GM12878 (cell line): ENCODE measurements at regions of chr3 and their contacts with region 1.

Region 1: DNA sequence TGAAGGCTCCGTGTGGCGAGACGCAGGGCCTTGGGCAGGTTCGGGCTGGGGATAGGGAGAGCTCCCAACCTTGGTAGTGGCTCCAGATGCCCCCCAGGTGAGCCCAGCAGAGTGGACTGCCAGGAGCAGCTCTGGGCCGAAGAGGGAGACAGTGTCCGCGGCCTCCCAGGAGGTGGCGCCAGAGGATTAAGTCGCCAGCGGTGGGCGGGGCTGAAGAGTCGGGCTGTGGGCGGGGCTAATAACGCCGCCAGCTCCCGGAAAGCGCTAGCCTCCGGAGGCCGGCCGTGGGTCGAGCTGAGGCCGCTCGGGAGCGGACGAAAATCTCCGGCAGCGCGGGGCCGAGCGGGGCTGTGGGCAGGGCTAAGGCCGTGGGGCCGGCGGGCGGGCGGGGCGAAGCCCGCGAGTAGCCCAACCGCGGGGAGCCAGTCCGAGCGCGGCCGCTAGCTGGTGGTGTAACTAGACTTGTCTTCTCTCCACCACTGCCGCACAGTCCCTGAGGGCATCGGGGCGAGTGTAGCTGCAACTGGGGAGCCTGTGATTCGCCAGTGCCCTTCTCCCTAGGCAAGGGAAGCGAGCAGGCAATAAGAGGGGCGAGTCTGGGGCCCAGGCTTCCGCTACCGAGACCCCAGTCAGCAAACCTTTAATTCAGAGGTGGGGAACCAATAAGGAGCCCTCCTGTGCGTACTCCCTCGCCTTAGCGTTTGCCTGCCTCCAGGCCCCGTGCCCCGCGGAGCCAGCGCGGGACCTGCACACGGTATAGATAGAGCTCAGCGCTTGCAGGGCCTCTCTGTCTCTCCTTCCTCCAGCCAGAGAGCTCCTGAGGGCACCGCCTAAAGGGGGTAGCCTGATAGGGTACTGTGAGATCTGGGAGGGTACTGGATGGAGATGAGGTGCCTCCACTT is 14.4 kb upstream of the BSN start:
- DNase-seq: peak; percentile 45
- ATAC-seq: peak; percentile 98
- H3K4me3 ChIP-seq: peak overlapping the region; percentile 50; the same call in 1 of the 2 replicates
- H3K27ac ChIP-seq: no peak overlapping the region
- H3K4me1 ChIP-seq: peaks cover 5% of the 10 kb centered on the region; the same call in 1 of the 2 replicates
- H3K27me3 ChIP-seq: no peaks in the 10 kb centered on the region; a peak in 1 of 4 replicates
- CTCF ChIP-seq: peak; percentile 83 to 97 (median 93); a peak in 5 of 6 replicates
- EP300 ChIP-seq: no peak
- POLR2A ChIP-seq: 0 out of 2 replicates have a peak, but pooled peaks have one; percentile 36
- RAD21 ChIP-seq: peak; percentile 94

Region 2: DNA sequence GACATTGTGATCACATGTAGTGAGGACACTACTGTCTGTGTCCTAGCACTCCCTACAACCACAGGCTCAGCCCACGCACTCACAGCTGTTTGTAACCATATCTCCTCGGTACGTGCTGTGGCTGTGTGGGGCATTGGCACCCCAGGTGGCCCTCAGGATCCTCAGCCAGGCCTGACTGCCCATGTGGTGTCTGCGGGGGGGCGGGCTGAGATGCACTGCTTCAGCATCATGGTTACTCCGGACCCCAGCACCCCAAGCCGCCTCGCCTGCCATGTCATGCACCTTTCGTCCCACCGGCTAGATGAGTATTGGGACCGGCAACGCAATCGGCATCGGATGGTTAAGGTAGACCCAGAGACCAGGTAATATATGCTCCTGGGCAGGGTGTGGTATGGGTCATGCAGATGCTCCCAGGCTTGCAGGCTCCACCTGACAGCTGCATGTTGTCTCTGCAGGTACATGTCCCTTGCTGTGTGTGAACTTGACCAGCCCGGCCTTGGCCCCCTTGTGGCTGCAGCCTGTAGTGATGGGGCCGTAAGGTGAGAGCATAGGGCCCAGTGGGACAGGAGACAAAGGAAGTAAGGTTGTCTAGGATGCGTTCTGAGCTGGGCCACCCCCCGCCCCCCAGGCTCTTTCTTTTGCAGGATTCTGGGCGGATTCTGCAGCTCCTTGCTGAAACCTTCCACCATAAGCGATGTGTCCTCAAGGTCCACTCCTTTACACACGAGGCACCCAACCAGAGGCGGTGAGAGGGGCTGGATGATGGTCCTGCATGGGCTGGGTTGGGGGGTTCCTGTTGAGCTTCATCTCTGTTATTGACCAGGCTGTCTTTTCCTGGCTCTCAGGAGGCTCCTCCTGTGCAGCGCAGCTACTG is 525.9 kb before region 1 on chr3:
- CTCF ChIA-PET with region 1: no interaction called
- POLR2A ChIA-PET with region 1: no interaction called
- RAD21 ChIA-PET with region 1: no interaction called
- SMC1A ChIA-PET with region 1: no interaction called
- in situ Hi-C with region 1: no loop called
- intact Hi-C with region 1: no loop called
- DNase-seq: no peak
- ATAC-seq: peak; percentile 67
- H3K4me3 ChIP-seq: no peak overlapping the region
- H3K27ac ChIP-seq: no peak overlapping the region
- H3K4me1 ChIP-seq: peaks cover 5% of the 10 kb centered on the region; the same call in 1 of the 2 replicates
- H3K27me3 ChIP-seq: no peaks in the 10 kb centered on the region
- CTCF ChIP-seq: peak; percentile 62 to 85 (median 71)
- EP300 ChIP-seq: no peak
- POLR2A ChIP-seq: no peak
- RAD21 ChIP-seq: peak; percentile 48

Region 3: GRCh38 chr3:49500205-49500731 is 39.6 kb before region 1 on chr3:
- CTCF ChIA-PET with region 1: interaction called, 11 read pairs
- POLR2A ChIA-PET with region 1: interaction called, 3 read pairs
- RAD21 ChIA-PET with region 1: interaction called, 3 read pairs
- SMC1A ChIA-PET with region 1: no interaction called
- in situ Hi-C with region 1: no loop called
- intact Hi-C with region 1: no loop called
- DNase-seq: no peak
- ATAC-seq: no peak
- H3K4me3 ChIP-seq: no peak overlapping the region
- H3K27ac ChIP-seq: no peak overlapping the region
- H3K4me1 ChIP-seq: peaks cover 2% of the 10 kb centered on the region
- H3K27me3 ChIP-seq: no peaks in the 10 kb centered on the region
- CTCF ChIP-seq: no peak
- EP300 ChIP-seq: no peak
- POLR2A ChIP-seq: no peak
- RAD21 ChIP-seq: no peak

Region 4: GRCh38 chr3:49553692-49554632 is 14.1 kb after region 1 on chr3 and contains the start of gene BSN:
- CTCF ChIA-PET with region 1: interaction called, 12 read pairs
- POLR2A ChIA-PET with region 1: no interaction called
- RAD21 ChIA-PET with region 1: interaction called, 20 read pairs
- SMC1A ChIA-PET with region 1: interaction called, 4 read pairs
- in situ Hi-C with region 1: no loop called
- intact Hi-C with region 1: no loop called
- DNase-seq: peak; percentile 42
- ATAC-seq: peak; percentile 96
- H3K4me3 ChIP-seq: peak within 1 kb of the TSS; percentile 59
- H3K27ac ChIP-seq: no peak within 1 kb of the TSS
- H3K4me1 ChIP-seq: peaks cover 5% of the 10 kb centered on the region
- H3K27me3 ChIP-seq: peaks cover 4 to 9% of the 10 kb centered on the region in 2 experiments
- CTCF ChIP-seq: no peak
- EP300 ChIP-seq: no peak
- POLR2A ChIP-seq: no peak
- RAD21 ChIP-seq: no peak
- polyA plus RNA-seq, gene BSN: under 0.01 TPM in 1 of 2 experiments, not detected in the other

Region 5: GRCh38 chr3:49668861-49669260 is 129.0 kb after region 1 on chr3:
- CTCF ChIA-PET with region 1: interaction called, 210 read pairs
- POLR2A ChIA-PET with region 1: interaction called, 10 read pairs
- RAD21 ChIA-PET with region 1: interaction called, 89 read pairs
- SMC1A ChIA-PET with region 1: interaction called, 86 read pairs
- in situ Hi-C with region 1: loop called (anchors 10 kb)
- intact Hi-C with region 1: loop called (anchors 1 kb)
- DNase-seq: no peak
- ATAC-seq: no peak
- H3K4me3 ChIP-seq: no peak overlapping the region
- H3K27ac ChIP-seq: no peak overlapping the region
- H3K4me1 ChIP-seq: peaks cover 5% of the 10 kb centered on the region
- H3K27me3 ChIP-seq: no peaks in the 10 kb centered on the region
- CTCF ChIP-seq: no peak
- EP300 ChIP-seq: no peak
- POLR2A ChIP-seq: no peak
- RAD21 ChIP-seq: no peak

Region 6: DNA sequence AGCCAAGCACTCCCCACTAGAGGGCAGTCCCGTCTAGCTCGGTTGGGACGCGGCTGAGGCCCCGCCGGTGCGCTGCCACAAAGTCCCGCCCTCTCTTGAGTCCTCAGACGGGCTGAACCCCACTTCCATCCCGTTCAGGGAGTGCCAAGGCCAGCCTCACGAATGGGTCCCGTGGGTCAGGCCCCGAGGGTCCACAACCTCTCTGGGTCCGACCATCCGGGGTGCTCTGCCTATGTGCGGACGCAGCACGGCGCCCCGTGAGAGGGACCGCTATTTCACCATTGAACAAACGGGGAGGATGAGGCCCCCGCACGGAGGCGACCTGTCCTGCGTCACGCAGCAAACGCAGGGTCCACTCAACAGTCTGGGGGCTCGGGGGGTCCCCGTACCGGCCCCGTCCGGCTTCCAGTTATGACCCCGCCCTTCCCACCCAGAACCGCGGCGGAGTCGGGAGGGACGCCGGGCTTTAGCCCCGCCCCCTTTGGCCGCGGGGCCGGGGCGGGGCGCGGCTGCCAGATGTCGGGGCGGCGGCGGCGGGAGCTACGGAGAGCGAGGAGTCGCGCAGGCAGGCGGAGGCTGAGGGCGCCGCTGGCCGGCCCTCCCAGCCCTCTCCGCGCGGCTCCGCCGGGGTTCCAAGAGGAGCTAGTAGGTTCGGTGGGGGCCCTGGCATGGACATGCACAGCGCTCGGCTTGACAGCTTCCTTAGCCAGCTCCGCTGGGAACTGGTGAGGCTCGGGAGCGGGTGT is 263.0 kb after region 1 on chr3 and contains the start of gene INKA1:
- CTCF ChIA-PET with region 1: interaction called, 9 read pairs
- POLR2A ChIA-PET with region 1: no interaction called
- RAD21 ChIA-PET with region 1: interaction called, 11 read pairs
- SMC1A ChIA-PET with region 1: interaction called, 3 read pairs
- in situ Hi-C with region 1: no loop called
- intact Hi-C with region 1: no loop called
- DNase-seq: no peak
- ATAC-seq: peak; percentile 81
- H3K4me3 ChIP-seq: peak within 1 kb of the TSS; percentile 98
- H3K27ac ChIP-seq: peak within 1 kb of the TSS; percentile 37; the same call in 1 of the 2 replicates
- H3K4me1 ChIP-seq: peaks cover 39% of the 10 kb centered on the region
- H3K27me3 ChIP-seq: no peaks in the 10 kb centered on the region; a peak in 1 of 4 replicates
- CTCF ChIP-seq: peak; percentile 88 to 97 (median 93); a peak in 5 of 6 replicates
- EP300 ChIP-seq: no peak
- POLR2A ChIP-seq: peak; percentile 39; the same call in 1 of the 2 replicates
- RAD21 ChIP-seq: peak; percentile 81
- polyA plus RNA-seq, gene INKA1: 0.32 to 1.4 TPM